Transverse colon (tissue), 4 donors: ENCODE measurements at regions of chr17 and their contacts with region 1.

Region 1: GRCh38 chr17:10844621-10845387 is 6.9 kb upstream of the PIRT start:
- DNase-seq: peak; percentile 92
- H3K4me3 ChIP-seq: peak overlapping the region; percentile 22 to 73 (median 45)
- H3K27ac ChIP-seq: peak overlapping the region; percentile 82 to 92 (median 86)
- H3K4me1 ChIP-seq: peaks cover 0 to 25% (median 18%) of the 10 kb centered on the region in 4 donors
- H3K27me3 ChIP-seq: no peaks in the 10 kb centered on the region
- CTCF ChIP-seq: peak; percentile 92 to 99 (median 98)
- EP300 ChIP-seq: peak; percentile 6
- POLR2A ChIP-seq: peak; percentile 74

Region 2: DNA sequence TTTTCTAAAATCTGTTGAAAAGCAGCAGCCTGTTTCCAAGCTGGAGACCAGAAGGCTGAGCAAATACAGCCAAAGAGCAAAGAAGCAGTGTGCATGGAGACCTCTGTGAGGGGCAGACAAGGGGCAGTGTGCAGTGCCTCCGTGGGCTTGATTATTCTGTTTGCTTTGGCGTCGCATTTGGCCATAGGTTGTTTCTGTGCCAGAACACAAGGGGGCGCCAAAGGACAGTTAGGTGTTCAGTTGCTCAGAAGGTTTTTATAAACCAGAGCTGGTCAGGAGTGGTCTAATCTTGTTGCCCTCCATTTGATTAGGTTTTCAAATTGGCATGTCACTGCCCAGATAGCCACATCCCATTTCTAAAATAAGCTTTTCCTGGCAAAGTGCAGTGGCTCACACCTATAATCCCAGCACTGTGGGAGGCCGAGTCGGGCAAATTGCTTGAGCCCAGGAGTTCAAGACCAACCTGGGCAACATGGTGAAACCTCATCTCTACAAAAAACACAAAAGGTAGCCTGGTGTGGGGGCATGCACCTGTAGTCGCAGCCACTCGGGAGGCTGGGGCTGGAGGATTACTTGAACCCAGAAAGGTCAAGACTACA is 198.3 kb before region 1 on chr17:
- in situ Hi-C with region 1: loop called in 3 of 4 experiments (anchors 10 to 25 kb)
- intact Hi-C with region 1: no loop called
- DNase-seq: peak; percentile 69
- H3K4me3 ChIP-seq: no peak overlapping the region
- H3K27ac ChIP-seq: no peak overlapping the region
- H3K4me1 ChIP-seq: no peaks in the 10 kb centered on the region
- H3K27me3 ChIP-seq: no peaks in the 10 kb centered on the region
- CTCF ChIP-seq: peak; percentile 73 to 87 (median 85)
- EP300 ChIP-seq: no peak
- POLR2A ChIP-seq: no peak

Region 3: GRCh38 chr17:10729334-10730193 is 115.2 kb before region 1 on chr17 and contains the start of gene TMEM220:
- in situ Hi-C with region 1: loop called in 2 of 4 experiments (anchors 10 kb)
- intact Hi-C with region 1: no loop called
- DNase-seq: peak; percentile 79
- H3K4me3 ChIP-seq: peak within 1 kb of the TSS; percentile 55 to 72 (median 64)
- H3K27ac ChIP-seq: peak within 1 kb of the TSS; percentile 89 to 94 (median 92)
- H3K4me1 ChIP-seq: peaks cover 0 to 45% (median 17%) of the 10 kb centered on the region in 4 donors
- H3K27me3 ChIP-seq: no peaks in the 10 kb centered on the region
- CTCF ChIP-seq: no peak
- EP300 ChIP-seq: no peak
- POLR2A ChIP-seq: peak; percentile 77
- total RNA-seq, gene TMEM220: 2.4 to 18.2 (median 8.1) TPM in 3 of 4 donors, not detected in the other

Region 4: DNA sequence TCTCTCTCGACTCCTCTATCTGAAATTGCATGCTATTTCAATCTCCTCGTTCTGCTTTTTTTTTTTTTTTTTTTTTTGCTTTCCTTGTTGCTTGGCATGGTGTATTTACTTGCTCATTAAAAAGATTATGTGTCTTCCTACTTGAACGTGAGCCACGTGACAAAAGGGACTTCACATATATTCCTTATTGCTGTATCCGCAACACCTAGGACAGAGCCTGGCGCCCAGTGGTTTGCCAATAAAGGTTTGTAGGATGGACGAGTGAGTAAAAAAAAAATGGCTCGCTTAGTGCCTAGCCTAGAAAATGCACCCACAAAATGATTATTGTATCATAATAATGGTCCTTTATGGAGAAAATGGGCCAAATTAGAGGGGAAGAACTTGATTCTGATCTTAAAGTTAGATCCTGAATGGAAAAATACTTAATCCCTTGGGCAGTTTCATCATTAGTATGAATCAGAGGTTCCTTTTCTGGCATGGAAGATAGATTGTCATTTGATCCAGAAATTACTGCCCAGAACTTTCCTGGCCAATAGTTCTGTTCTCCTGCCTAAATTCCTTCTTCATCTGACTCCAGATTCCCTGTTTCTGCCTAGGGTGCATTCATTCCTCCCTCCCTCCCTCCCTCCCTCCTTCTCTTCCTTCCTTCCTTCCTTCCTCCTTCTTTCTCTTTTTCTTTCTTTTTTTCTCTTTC is 101.3 kb before region 1 on chr17:
- in situ Hi-C with region 1: loop called in 3 of 4 experiments (anchors 10 kb)
- intact Hi-C with region 1: no loop called
- DNase-seq: no peak
- H3K4me3 ChIP-seq: no peak overlapping the region
- H3K27ac ChIP-seq: peak overlapping the region in 1 of 4 donors; percentile 39
- H3K4me1 ChIP-seq: peaks cover 6 to 24% (median 14%) of the 10 kb centered on the region in 4 donors
- H3K27me3 ChIP-seq: no peaks in the 10 kb centered on the region
- CTCF ChIP-seq: no peak
- EP300 ChIP-seq: no peak
- POLR2A ChIP-seq: no peak